Naive thymus-derived CD4-positive, alpha-beta T cell (primary cell): ENCODE measurements at regions of chr10 and their contacts with region 1.

Region 1: DNA sequence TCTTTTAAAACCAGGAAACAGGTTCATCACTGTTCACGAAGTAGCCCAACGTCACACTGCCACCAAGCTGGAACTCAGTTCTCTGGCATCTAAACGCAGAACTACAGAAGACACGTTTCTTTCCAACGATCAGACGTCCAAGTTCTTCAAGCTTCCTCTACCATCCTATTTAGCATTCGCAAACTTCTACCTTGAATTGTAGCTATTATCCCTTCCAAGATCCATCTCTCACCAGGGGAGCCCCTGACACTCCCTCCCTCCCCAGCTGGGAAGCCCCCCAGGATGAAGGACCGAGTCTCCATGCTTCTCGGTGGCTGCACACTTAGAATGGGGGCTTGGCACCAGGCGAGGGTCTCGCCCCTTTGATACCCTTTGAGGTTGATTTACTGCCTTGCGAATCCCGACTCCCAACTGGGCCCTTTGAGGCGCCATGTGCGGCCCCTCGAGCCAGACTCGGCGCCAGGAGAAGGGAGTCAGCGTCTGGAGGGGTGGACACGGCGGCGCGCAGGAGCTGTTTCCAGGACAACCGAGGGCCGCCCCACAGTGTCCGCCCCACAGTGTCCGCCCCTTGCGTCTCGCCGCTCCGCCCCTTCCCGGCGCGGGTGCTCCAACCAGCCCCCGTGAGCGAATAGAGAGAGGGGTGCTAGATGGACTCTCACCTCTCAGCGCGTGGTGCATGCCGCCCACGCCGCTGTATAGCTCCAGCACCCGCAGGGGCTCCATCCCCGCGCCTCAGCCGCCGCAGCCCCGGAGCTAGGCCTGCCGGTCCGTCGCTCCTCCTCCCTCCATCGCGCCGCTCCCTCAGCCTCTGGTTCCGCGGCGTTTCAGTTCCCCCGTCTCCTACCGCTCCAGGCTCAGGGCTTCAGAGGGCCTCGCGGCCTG is at the start of gene TRDMT1:
- DNase-seq: peak; percentile 60 to 82 (median 74)
- ATAC-seq: peak; percentile 89
- H3K4me3 ChIP-seq: peak within 1 kb of the TSS; percentile 94
- H3K4me3 Mint-ChIP-seq: peak within 1 kb of the TSS; percentile 86 to 99 (median 94)
- H3K27ac ChIP-seq: peak within 1 kb of the TSS; percentile 90
- H3K27ac Mint-ChIP-seq: peak within 1 kb of the TSS; percentile 90 to 99 (median 96)
- H3K4me1 ChIP-seq: peaks cover 9 to 15% of the 10 kb centered on the region in 2 donors
- H3K4me1 Mint-ChIP-seq: peaks cover 25 to 67% (median 51%) of the 10 kb centered on the region in 7 donors
- H3K27me3 ChIP-seq: no peaks in the 10 kb centered on the region
- H3K27me3 Mint-ChIP-seq: peaks cover 0 to 4% (median 0%) of the 10 kb centered on the region in 5 donors
- total RNA-seq, gene TRDMT1: 10.2 to 30.6 (median 15.9) TPM

Region 2: GRCh38 chr10:16436758-16437539 is 764.2 kb before region 1 on chr10 and contains the start of gene PTER:
- CTCF ChIA-PET with region 1: no interaction called
- POLR2A ChIA-PET with region 1: no interaction called
- intact Hi-C with region 1: loop called in 1 of 2 experiments (anchors 10 kb)
- DNase-seq: peak; percentile 92 to 99 (median 94)
- ATAC-seq: peak; percentile 100
- H3K4me3 ChIP-seq: peak within 1 kb of the TSS; percentile 93
- H3K4me3 Mint-ChIP-seq: peak within 1 kb of the TSS; percentile 91 to 99 (median 96)
- H3K27ac ChIP-seq: peak within 1 kb of the TSS; percentile 77
- H3K27ac Mint-ChIP-seq: peak within 1 kb of the TSS; percentile 87 to 97 (median 94)
- H3K4me1 ChIP-seq: peaks cover 13 to 28% of the 10 kb centered on the region in 2 donors
- H3K4me1 Mint-ChIP-seq: peaks cover 36 to 57% (median 48%) of the 10 kb centered on the region in 7 donors
- H3K27me3 ChIP-seq: no peaks in the 10 kb centered on the region
- H3K27me3 Mint-ChIP-seq: peaks cover 0 to 19% (median 0%) of the 10 kb centered on the region in 5 donors
- total RNA-seq, gene PTER: 12.9 to 23.7 (median 15.3) TPM

Region 3: DNA sequence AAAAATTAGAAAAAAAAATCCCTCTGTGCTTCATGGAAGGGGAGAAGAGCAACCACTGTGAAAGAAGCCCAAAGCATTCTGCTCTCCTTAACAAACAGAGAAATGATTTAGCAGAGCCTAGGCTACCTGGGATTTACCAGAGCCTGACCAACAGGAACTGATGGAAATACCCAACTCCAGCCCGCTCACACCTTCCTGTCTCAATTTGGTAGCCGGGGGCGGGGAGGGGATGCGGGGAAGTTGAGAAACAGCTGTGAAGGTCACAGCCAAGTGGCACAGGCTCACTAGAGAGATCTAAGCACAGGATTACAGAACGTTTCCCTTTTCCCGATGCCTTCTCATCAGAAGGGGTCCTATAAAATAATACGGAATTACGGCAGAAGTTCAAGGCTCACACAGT is 401.5 kb before region 1 on chr10:
- CTCF ChIA-PET with region 1: no interaction called
- POLR2A ChIA-PET with region 1: no interaction called
- intact Hi-C with region 1: no loop called
- DNase-seq: peak in 1 of 9 donors; percentile 40
- ATAC-seq: no peak
- H3K4me3 ChIP-seq: no peak overlapping the region
- H3K4me3 Mint-ChIP-seq: no peak overlapping the region
- H3K27ac ChIP-seq: no peak overlapping the region
- H3K27ac Mint-ChIP-seq: no peak overlapping the region
- H3K4me1 ChIP-seq: no peaks in the 10 kb centered on the region
- H3K4me1 Mint-ChIP-seq: peaks cover 18 to 71% (median 61%) of the 10 kb centered on the region in 7 donors
- H3K27me3 ChIP-seq: no peaks in the 10 kb centered on the region
- H3K27me3 Mint-ChIP-seq: no peaks in the 10 kb centered on the region

Region 4: DNA sequence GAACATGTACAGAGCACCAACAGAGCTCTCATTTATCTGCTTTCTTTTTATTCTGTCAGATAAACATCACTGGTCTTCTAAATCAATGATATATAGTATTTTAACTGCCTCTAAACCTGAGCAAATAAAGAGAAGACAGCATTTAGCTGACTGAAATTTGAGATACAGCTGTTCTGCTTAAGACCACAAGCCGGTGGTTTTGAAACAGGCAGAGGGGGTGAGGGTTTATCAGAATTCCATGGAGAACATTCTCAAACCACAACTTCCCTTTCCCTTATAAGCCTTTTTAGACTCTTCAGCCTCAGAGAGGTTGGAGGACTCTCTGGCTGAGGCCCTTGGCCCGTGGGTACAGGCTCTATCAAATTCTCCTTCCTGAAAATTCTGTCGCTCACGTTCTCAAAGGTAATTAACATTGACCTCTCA is 296.5 kb before region 1 on chr10:
- CTCF ChIA-PET with region 1: no interaction called
- POLR2A ChIA-PET with region 1: no interaction called
- intact Hi-C with region 1: no loop called
- DNase-seq: no peak
- ATAC-seq: no peak
- H3K4me3 ChIP-seq: no peak overlapping the region
- H3K4me3 Mint-ChIP-seq: no peak overlapping the region
- H3K27ac ChIP-seq: no peak overlapping the region
- H3K27ac Mint-ChIP-seq: no peak overlapping the region
- H3K4me1 ChIP-seq: no peaks in the 10 kb centered on the region
- H3K4me1 Mint-ChIP-seq: peaks cover 0 to 7% (median 4%) of the 10 kb centered on the region in 7 donors
- H3K27me3 ChIP-seq: no peaks in the 10 kb centered on the region
- H3K27me3 Mint-ChIP-seq: peaks cover 0 to 7% (median 0%) of the 10 kb centered on the region in 5 donors

Region 5: GRCh38 chr10:17001961-17002749 is 199.0 kb before region 1 on chr10:
- CTCF ChIA-PET with region 1: no interaction called
- POLR2A ChIA-PET with region 1: interaction called, 6 read pairs
- intact Hi-C with region 1: loop called in 1 of 2 experiments (anchors 2 kb)
- DNase-seq: peak in 5 of 9 donors; percentile 25 to 79 (median 38)
- ATAC-seq: peak; percentile 59
- H3K4me3 ChIP-seq: no peak overlapping the region
- H3K4me3 Mint-ChIP-seq: peak overlapping the region in 9 of 10 donors; percentile 30 to 69 (median 63)
- H3K27ac ChIP-seq: peak overlapping the region; percentile 67
- H3K27ac Mint-ChIP-seq: peak overlapping the region; percentile 65 to 98 (median 85)
- H3K4me1 ChIP-seq: peaks cover 20 to 35% of the 10 kb centered on the region in 2 donors
- H3K4me1 Mint-ChIP-seq: peaks cover 21 to 79% (median 57%) of the 10 kb centered on the region in 7 donors
- H3K27me3 ChIP-seq: no peaks in the 10 kb centered on the region
- H3K27me3 Mint-ChIP-seq: peaks cover 0 to 66% (median 0%) of the 10 kb centered on the region in 5 donors

Region 6: GRCh38 chr10:17029581-17030271 is 171.4 kb before region 1 on chr10:
- CTCF ChIA-PET with region 1: no interaction called
- POLR2A ChIA-PET with region 1: interaction called, 3 read pairs
- intact Hi-C with region 1: loop called (anchors 1 kb)
- DNase-seq: peak; percentile 31 to 82 (median 50)
- ATAC-seq: peak; percentile 69
- H3K4me3 ChIP-seq: peak overlapping the region; percentile 46
- H3K4me3 Mint-ChIP-seq: peak overlapping the region; percentile 64 to 87 (median 83)
- H3K27ac ChIP-seq: peak overlapping the region; percentile 70
- H3K27ac Mint-ChIP-seq: peak overlapping the region; percentile 75 to 97 (median 93)
- H3K4me1 ChIP-seq: peaks cover 52 to 53% of the 10 kb centered on the region in 2 donors
- H3K4me1 Mint-ChIP-seq: peaks cover 33 to 88% (median 81%) of the 10 kb centered on the region in 7 donors
- H3K27me3 ChIP-seq: no peaks in the 10 kb centered on the region
- H3K27me3 Mint-ChIP-seq: peaks cover 0 to 7% (median 0%) of the 10 kb centered on the region in 5 donors

Region 7: GRCh38 chr10:17190602-17191001 is 10.6 kb before region 1 on chr10:
- CTCF ChIA-PET with region 1: interaction called, 3 read pairs
- POLR2A ChIA-PET with region 1: interaction called, 13 read pairs
- intact Hi-C with region 1: no loop called
- DNase-seq: no peak
- ATAC-seq: no peak
- H3K4me3 ChIP-seq: no peak overlapping the region
- H3K4me3 Mint-ChIP-seq: no peak overlapping the region
- H3K27ac ChIP-seq: no peak overlapping the region
- H3K27ac Mint-ChIP-seq: peak overlapping the region in 1 of 9 donors; percentile 2
- H3K4me1 ChIP-seq: no peaks in the 10 kb centered on the region
- H3K4me1 Mint-ChIP-seq: peaks cover 0 to 30% (median 12%) of the 10 kb centered on the region in 7 donors
- H3K27me3 ChIP-seq: no peaks in the 10 kb centered on the region
- H3K27me3 Mint-ChIP-seq: no peaks in the 10 kb centered on the region

Region 8: GRCh38 chr10:17216217-17216900 is 15.2 kb after region 1 on chr10:
- CTCF ChIA-PET with region 1: interaction called, 4 read pairs
- POLR2A ChIA-PET with region 1: interaction called, 8 read pairs
- intact Hi-C with region 1: loop called (anchors 1 kb)
- DNase-seq: no peak
- ATAC-seq: peak; percentile 91
- H3K4me3 ChIP-seq: no peak overlapping the region
- H3K4me3 Mint-ChIP-seq: peak overlapping the region in 2 of 10 donors; percentile 36 to 39
- H3K27ac ChIP-seq: no peak overlapping the region
- H3K27ac Mint-ChIP-seq: peak overlapping the region in 5 of 9 donors; percentile 32 to 95 (median 50)
- H3K4me1 ChIP-seq: peaks cover 5 to 11% of the 10 kb centered on the region in 2 donors
- H3K4me1 Mint-ChIP-seq: peaks cover 0 to 47% (median 5%) of the 10 kb centered on the region in 7 donors
- H3K27me3 ChIP-seq: no peaks in the 10 kb centered on the region
- H3K27me3 Mint-ChIP-seq: no peaks in the 10 kb centered on the region

Region 9: DNA sequence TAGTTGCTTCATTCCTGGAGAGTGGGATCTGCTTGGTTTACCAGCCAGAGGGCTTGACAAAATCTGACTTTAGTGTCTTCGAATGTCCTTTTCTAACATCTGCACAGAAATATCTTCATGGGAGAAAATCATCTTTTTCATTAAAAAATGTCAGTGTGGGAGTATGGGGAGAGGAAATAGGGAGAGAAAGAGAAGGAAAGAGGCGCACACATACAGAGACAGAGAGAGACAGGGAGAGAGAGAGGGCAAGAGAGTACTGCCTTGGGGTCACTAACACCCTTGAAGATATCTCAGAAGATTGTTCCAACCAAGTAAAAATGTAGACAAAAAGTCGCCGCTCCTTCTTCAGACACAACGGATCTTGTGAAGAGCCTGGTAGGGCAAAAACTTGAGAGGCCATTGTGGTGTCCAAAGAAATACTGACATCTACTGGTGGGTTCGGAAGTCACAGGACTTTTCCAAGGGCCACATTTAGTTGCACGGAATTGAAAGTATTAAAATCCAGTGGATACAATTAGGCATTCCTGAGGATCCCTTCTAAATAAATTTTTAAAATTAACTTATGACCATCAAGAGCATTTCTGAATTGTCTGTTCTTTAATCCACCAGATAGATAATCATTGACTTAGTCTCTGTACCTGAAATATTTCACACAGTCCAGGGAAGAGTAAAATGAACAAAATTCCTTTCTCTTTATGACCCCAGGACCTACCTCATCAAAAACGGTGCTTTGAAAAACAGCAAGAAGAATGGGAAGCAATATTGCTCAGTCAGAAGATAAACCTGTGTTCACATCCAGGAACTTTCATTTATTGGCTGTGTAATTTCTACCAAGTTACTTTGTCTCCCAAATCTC is 56.5 kb after region 1 on chr10:
- CTCF ChIA-PET with region 1: interaction called, 3 read pairs
- POLR2A ChIA-PET with region 1: no interaction called
- intact Hi-C with region 1: loop called in 1 of 2 experiments (anchors 2 kb)
- DNase-seq: peak in 8 of 9 donors; percentile 15 to 71 (median 58)
- ATAC-seq: peak; percentile 88
- H3K4me3 ChIP-seq: no peak overlapping the region
- H3K4me3 Mint-ChIP-seq: peak overlapping the region in 3 of 10 donors; percentile 39 to 55 (median 51)
- H3K27ac ChIP-seq: no peak overlapping the region
- H3K27ac Mint-ChIP-seq: peak overlapping the region in 1 of 9 donors; percentile 38
- H3K4me1 ChIP-seq: no peaks in the 10 kb centered on the region
- H3K4me1 Mint-ChIP-seq: peaks cover 5 to 13% (median 6%) of the 10 kb centered on the region in 7 donors
- H3K27me3 ChIP-seq: no peaks in the 10 kb centered on the region
- H3K27me3 Mint-ChIP-seq: no peaks in the 10 kb centered on the region

Region 10: GRCh38 chr10:17290226-17290625 is 89.1 kb after region 1 on chr10:
- CTCF ChIA-PET with region 1: no interaction called
- POLR2A ChIA-PET with region 1: no interaction called
- intact Hi-C with region 1: no loop called
- DNase-seq: peak in 6 of 9 donors; percentile 18 to 46 (median 30)
- ATAC-seq: peak; percentile 34
- H3K4me3 ChIP-seq: no peak overlapping the region
- H3K4me3 Mint-ChIP-seq: no peak overlapping the region
- H3K27ac ChIP-seq: no peak overlapping the region
- H3K27ac Mint-ChIP-seq: no peak overlapping the region
- H3K4me1 ChIP-seq: no peaks in the 10 kb centered on the region
- H3K4me1 Mint-ChIP-seq: peaks cover 0 to 8% (median 4%) of the 10 kb centered on the region in 7 donors
- H3K27me3 ChIP-seq: no peaks in the 10 kb centered on the region
- H3K27me3 Mint-ChIP-seq: peaks cover 0 to 24% (median 18%) of the 10 kb centered on the region in 5 donors

Region 11: GRCh38 chr10:18204039-18204835 is 1003.1 kb after region 1 on chr10:
- CTCF ChIA-PET with region 1: no interaction called
- POLR2A ChIA-PET with region 1: no interaction called
- intact Hi-C with region 1: no loop called
- DNase-seq: peak in 2 of 9 donors; percentile 1 to 21
- ATAC-seq: peak; percentile 61
- H3K4me3 ChIP-seq: no peak overlapping the region
- H3K4me3 Mint-ChIP-seq: no peak overlapping the region
- H3K27ac ChIP-seq: no peak overlapping the region
- H3K27ac Mint-ChIP-seq: peak overlapping the region in 1 of 9 donors; percentile 2
- H3K4me1 ChIP-seq: no peaks in the 10 kb centered on the region
- H3K4me1 Mint-ChIP-seq: peaks cover 0 to 11% (median 4%) of the 10 kb centered on the region in 7 donors
- H3K27me3 ChIP-seq: no peaks in the 10 kb centered on the region
- H3K27me3 Mint-ChIP-seq: peaks cover 0 to 5% (median 0%) of the 10 kb centered on the region in 5 donors